ENCODE measurements at regions of chr17 and their contacts with region 1.

Region 1: DNA sequence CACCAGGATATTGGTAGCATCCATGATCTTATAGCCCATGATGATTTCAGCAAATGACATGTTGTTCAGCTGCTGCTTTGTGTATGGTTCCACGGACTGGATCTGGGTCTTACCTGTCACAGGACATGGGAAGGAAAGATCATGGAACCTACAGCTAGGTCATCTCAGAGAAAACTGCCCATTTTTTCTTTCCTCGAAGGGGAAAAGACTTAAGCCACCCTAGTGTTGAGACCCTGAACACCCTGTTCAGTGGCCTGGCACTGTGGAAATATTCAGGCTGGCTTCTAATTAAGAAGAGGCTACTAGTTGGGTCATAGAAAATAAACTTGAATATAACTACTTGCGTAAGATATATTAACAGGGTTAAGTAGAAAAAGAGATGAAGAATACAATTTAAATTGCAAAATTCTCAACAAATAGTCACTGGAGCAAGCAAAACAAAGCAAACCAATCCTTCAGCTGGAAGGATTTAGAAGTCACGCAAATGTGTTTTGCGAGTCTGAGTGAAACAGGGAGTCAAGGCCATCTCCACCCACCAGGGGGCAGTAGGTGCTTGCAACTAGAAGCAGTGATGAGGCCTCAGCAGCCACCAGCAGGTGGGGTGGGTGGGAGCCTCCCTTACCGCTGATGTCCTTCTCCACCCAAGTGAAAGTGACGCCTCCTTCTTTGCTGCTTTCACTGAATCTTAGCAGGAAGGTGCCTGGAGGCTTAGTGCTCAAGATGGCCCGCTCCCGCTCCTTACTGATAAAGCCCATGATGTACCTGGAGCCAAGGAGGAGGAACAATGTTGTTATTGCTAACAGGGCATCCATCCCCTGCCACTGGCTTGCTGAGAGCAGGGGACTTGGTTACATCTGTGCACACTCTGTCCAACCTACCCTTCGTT is 34.3 kb downstream of the STAT5A start:
- DNase-seq: peak; percentile 99
- H3K4me3 Mint-ChIP-seq: peak overlapping the region; percentile 9
- H3K27ac Mint-ChIP-seq: peak overlapping the region; percentile 81
- H3K4me1 Mint-ChIP-seq: peaks cover 55% of the 10 kb centered on the region
- H3K27me3 Mint-ChIP-seq: no peaks in the 10 kb centered on the region

Region 2: DNA sequence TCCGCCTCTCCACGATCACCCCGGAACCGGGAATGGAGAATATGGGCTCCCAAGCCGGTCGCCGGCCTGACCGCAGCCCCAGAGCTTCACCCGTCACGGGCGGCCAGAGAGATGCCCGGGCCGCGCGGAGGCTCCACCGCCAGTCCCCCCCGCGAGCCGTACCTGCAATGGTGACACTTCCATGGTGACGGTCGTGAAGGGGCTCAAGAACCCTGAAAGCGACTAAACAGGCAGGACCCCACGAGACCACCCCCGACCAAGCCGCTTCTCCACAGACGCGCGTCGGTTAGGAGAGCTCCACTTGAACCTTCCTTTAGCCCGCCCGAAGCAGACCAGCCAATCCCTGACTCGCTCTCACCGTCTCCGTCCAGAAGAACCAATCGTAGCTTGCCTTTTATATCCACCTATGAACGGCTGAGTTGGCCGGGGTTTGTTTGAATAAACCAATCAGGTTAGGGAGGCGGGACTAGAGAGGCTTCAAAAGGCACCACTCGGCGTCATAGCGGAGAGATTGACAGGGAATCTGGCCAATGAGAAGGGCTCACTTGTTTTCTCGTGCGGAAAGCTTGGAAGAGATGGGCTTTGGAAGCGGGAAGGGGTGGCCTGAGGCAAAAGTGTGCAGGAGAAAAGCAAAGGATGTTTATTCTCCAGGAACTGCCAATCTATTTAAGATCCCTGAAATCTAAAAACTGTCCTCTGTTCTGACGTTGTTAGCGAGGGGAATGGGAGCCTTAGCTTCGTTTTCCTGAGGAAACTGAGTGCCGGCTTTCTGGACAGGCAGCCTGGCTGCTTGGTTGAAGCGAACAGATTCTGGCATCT is 1904.8 kb before region 1 on chr17 and contains the start of gene TOP2A:
- CTCF ChIA-PET with region 1: no interaction called
- intact Hi-C with region 1: no loop called
- DNase-seq: peak; percentile 99
- H3K4me3 Mint-ChIP-seq: peak within 1 kb of the TSS; percentile 98
- H3K27ac Mint-ChIP-seq: peak within 1 kb of the TSS; percentile 90
- H3K4me1 Mint-ChIP-seq: peaks cover 26% of the 10 kb centered on the region
- H3K27me3 Mint-ChIP-seq: peaks cover 2% of the 10 kb centered on the region
- total RNA-seq, gene TOP2A: 410 to 416 TPM

Region 3: DNA sequence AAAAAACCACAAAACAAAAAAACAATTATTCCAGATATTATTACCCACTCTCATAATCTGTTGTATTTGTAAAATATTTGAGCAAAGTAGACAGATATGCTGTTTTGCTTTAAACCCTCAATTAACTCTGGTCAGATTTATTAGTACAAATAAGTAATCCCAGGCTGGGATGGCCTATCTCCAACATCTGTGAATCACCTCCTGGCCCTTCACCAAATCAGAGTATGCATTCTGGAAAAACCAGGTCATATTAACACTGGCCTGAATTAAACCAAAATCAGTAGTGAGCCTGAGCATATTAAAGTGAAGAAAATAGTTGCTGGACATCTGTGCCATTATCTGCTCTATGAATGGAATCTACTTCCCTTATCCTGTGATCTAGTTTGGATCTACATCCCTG is 24.6 kb after region 1 on chr17:
- CTCF ChIA-PET with region 1: interaction called, 17 read pairs
- intact Hi-C with region 1: no loop called
- DNase-seq: no peak
- H3K4me3 Mint-ChIP-seq: no peak overlapping the region
- H3K27ac Mint-ChIP-seq: no peak overlapping the region
- H3K4me1 Mint-ChIP-seq: peaks cover 51% of the 10 kb centered on the region
- H3K27me3 Mint-ChIP-seq: no peaks in the 10 kb centered on the region

Measured in activated naive CD4-positive, alpha-beta T cell treated with anti-CD3 and anti-CD28 coated beads for 36 hours (primary cell).